Transverse colon (tissue), 4 donors: ENCODE measurements at regions of chr4 and their contacts with region 1.

Region 1: GRCh38 chr4:165327211-165328100 is at the start of gene MSMO1:
- DNase-seq: peak; percentile 99
- H3K4me3 ChIP-seq: peak within 1 kb of the TSS; percentile 78 to 90 (median 86)
- H3K27ac ChIP-seq: peak within 1 kb of the TSS; percentile 85 to 92 (median 89)
- H3K4me1 ChIP-seq: peaks cover 10 to 47% (median 21%) of the 10 kb centered on the region in 4 donors
- H3K27me3 ChIP-seq: no peaks in the 10 kb centered on the region
- CTCF ChIP-seq: no peak
- EP300 ChIP-seq: no peak
- POLR2A ChIP-seq: peak; percentile 78
- total RNA-seq, gene MSMO1: 30.3 to 58.0 (median 36.5) TPM

Region 2: GRCh38 chr4:165131247-165131832 is 196.1 kb before region 1 on chr4:
- in situ Hi-C with region 1: loop called in 1 of 4 experiments (anchors 25 kb)
- intact Hi-C with region 1: no loop called
- DNase-seq: peak; percentile 67
- H3K4me3 ChIP-seq: no peak overlapping the region
- H3K27ac ChIP-seq: no peak overlapping the region
- H3K4me1 ChIP-seq: no peaks in the 10 kb centered on the region
- H3K27me3 ChIP-seq: peaks cover 3% of the 10 kb centered on the region
- CTCF ChIP-seq: peak; percentile 84 to 93 (median 88)
- EP300 ChIP-seq: no peak
- POLR2A ChIP-seq: no peak

Region 3: GRCh38 chr4:165207431-165208220 is 119.8 kb before region 1 on chr4 and contains the start of gene KLHL2:
- in situ Hi-C with region 1: loop called in 2 of 4 experiments (anchors 10 to 25 kb)
- intact Hi-C with region 1: no loop called
- DNase-seq: peak; percentile 85
- H3K4me3 ChIP-seq: peak within 1 kb of the TSS; percentile 77 to 97 (median 90)
- H3K27ac ChIP-seq: peak within 1 kb of the TSS; percentile 89 to 92 (median 90)
- H3K4me1 ChIP-seq: peaks cover 5 to 24% (median 10%) of the 10 kb centered on the region in 4 donors
- H3K27me3 ChIP-seq: no peaks in the 10 kb centered on the region
- CTCF ChIP-seq: no peak
- EP300 ChIP-seq: no peak
- POLR2A ChIP-seq: no peak
- total RNA-seq, gene KLHL2: 9.2 to 19.8 (median 12.0) TPM